PC-3 (cell line): ENCODE measurements at regions of chr15 and their contacts with region 1.

Region 1: DNA sequence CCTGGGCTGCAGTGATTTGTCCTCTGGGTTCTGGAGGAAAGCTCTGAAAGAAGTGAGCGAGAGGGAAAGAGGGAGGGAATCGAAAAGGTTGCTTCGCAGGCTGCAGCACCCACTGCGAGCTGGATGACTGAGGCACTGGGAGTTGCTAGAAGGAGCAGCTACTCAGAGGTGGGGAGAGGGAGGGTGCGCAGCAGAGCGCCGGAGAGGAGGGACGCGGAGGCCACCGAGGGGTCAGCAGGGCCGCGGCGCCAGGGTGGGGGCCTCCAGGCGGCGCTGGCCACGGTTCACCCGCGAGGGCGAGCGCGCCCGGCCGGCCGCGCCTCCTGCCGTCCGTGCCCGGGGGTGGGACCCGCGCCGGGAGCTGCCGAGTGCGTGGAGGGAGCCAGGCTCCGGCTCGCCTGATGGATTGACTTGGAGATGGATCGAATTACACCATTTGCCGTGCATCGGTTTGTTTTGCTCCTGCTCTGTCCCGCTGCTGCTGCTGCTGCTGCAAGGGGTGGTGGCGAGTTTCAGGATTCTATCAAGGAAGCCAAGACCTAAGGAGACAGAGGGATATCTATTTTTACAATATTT is at the start of gene SEMA6D:
- DNase-seq: peak; percentile 73
- ATAC-seq: peak; percentile 81
- H3K4me3 ChIP-seq: peak within 1 kb of the TSS; percentile 82
- H3K27ac ChIP-seq: no peak within 1 kb of the TSS
- H3K4me1 ChIP-seq: peaks cover 9% of the 10 kb centered on the region; the same call in 1 of the 2 replicates
- H3K27me3 ChIP-seq: no peaks in the 10 kb centered on the region
- CTCF ChIP-seq: peak; percentile 45; the same call in 1 of the 2 replicates
- total RNA-seq, gene SEMA6D: 0.52 and 0.91 TPM in 2 replicates

Region 2: DNA sequence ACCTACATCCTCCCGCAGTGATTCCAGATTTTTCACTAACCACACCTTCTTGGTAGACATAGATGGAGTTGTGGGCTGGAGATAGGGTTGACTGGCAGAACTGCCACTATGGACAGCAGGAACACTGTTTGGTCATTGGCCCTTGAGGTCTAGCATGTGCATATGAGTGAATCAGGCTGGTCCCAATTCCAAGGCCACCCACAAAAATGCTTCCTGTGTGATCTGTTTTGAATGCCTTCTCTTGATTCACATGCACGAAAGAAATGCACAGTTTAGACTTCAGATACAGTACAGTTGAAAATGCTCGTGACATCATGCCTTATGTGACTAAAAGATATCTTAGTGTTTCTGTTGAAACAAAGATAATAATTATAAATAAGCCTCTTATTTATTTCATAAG is 285.6 kb before region 1 on chr15:
- CTCF ChIA-PET with region 1: no interaction called
- POLR2A ChIA-PET with region 1: no interaction called
- intact Hi-C with region 1: loop called (anchors 10 kb)
- DNase-seq: peak; percentile 25
- ATAC-seq: no peak
- H3K4me3 ChIP-seq: no peak overlapping the region
- H3K27ac ChIP-seq: no peak overlapping the region
- H3K4me1 ChIP-seq: 0 out of 2 replicates have a peak, but pooled peaks cover 6% of the 10 kb centered on the region
- H3K27me3 ChIP-seq: no peaks in the 10 kb centered on the region
- CTCF ChIP-seq: no peak

Region 3: DNA sequence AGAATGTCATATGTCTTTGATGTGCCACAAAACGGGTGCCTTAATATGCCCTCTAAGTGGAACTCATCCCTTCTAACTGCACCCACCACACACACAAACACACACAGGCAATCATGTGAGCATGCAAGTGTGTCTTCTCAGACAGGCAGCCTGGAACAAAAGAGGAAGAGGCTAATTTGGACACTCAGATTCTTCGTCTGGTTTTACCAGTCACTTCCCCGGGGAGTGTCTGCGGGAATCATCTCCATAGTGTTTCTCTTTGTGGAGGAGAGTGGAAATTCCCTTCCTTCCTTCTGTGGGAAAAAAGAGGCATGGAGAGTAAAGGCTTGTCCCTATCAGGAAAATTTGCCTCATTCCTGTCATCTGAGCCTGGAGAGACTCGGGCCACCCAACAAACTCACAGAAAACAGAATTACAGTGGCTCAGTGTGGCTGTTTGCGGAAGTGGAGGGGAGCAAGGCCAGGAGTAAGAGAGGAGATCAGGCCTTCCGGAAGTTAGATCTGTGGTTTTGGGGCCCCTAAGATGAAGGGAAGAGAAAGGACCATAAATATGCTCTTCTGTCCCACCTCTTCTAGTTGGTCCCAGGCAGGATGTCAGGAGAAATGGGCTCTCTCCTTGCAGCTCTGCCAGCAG is 212.4 kb before region 1 on chr15:
- CTCF ChIA-PET with region 1: no interaction called
- POLR2A ChIA-PET with region 1: no interaction called
- intact Hi-C with region 1: loop called (anchors 5 kb)
- DNase-seq: no peak
- ATAC-seq: no peak
- H3K4me3 ChIP-seq: no peak overlapping the region
- H3K27ac ChIP-seq: no peak overlapping the region
- H3K4me1 ChIP-seq: no peaks in the 10 kb centered on the region
- H3K27me3 ChIP-seq: no peaks in the 10 kb centered on the region
- CTCF ChIP-seq: no peak

Region 4: DNA sequence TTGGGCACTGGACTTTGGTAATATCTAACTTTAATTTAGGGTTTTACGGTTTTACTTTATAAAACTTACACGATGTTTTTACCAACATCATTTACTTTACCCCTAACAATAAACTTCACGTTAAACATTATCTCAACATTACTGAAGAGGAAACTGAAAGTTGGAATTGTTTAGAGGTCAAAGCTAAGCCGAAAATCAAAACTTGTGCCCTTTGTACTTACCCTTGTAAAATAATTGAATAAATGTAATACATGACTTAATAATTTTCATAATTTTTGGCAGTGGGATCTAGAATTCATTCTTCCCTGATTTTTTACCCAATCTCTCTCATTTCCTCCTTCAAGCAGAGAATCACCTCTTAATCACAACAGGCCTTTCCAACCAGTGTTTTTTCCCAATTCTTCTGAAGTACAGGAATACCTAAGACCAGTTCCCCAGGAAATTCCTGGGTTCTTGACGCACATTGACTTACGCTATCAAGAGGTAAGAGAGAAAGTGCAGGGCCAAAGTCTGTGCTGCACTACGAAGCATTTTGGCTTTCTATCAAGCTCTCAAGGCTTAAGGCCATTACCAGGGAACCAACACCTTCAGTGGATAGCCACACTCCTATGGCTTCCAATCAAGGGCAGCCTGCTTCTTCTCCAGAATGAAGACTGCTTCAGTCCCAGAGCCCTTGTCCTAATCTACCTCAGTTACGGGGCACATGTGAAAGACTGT is 11.7 kb before region 1 on chr15:
- CTCF ChIA-PET with region 1: no interaction called
- POLR2A ChIA-PET with region 1: no interaction called
- intact Hi-C with region 1: no loop called
- DNase-seq: no peak
- ATAC-seq: no peak
- H3K4me3 ChIP-seq: no peak overlapping the region
- H3K27ac ChIP-seq: no peak overlapping the region
- H3K4me1 ChIP-seq: no peaks in the 10 kb centered on the region
- H3K27me3 ChIP-seq: no peaks in the 10 kb centered on the region
- CTCF ChIP-seq: no peak

Region 5: DNA sequence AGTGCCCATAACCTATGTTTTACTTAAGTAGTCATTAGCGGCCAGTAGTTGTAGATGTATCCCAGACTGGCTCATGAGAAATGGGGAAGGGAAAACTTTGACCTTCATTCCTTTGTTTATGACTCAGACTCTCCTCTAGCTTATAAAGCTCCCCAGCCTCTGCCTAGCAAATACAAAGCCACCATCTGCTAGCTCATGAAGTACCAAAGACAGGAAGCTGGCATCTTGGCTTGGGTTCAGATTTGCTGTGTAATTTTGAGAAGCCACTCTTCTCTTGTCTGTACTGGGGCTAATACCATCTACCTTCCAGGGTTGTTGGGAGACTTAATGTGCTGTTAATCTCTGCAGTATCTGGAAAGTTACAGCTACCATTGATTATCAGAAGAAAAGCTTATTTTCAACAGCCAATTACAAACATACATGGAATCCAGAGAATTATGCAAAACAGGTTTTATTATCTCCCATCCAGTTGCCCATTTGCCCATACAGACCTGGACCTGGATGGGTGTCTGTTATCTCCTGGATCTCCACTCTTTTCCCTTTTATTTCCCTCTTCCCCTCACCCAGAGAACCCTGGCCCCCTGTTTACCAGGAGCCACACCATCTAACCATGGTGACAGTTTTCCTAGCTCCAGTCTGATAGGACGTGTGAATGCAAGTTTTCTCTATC is 154.0 kb after region 1 on chr15:
- CTCF ChIA-PET with region 1: no interaction called
- POLR2A ChIA-PET with region 1: no interaction called
- intact Hi-C with region 1: loop called (anchors 5 kb)
- DNase-seq: peak; percentile 88
- ATAC-seq: peak; percentile 96
- H3K4me3 ChIP-seq: no peak overlapping the region; the same call in 1 of the 2 replicates
- H3K27ac ChIP-seq: peak overlapping the region; percentile 93
- H3K4me1 ChIP-seq: peaks cover 19% of the 10 kb centered on the region
- H3K27me3 ChIP-seq: no peaks in the 10 kb centered on the region
- CTCF ChIP-seq: no peak

Region 6: GRCh38 chr15:47987908-47988532 is 270.9 kb after region 1 on chr15:
- CTCF ChIA-PET with region 1: interaction called, 4 read pairs
- POLR2A ChIA-PET with region 1: no interaction called
- intact Hi-C with region 1: loop called (anchors 1 kb)
- DNase-seq: peak; percentile 60
- ATAC-seq: peak; percentile 90
- H3K4me3 ChIP-seq: no peak overlapping the region
- H3K27ac ChIP-seq: no peak overlapping the region
- H3K4me1 ChIP-seq: no peaks in the 10 kb centered on the region
- H3K27me3 ChIP-seq: no peaks in the 10 kb centered on the region
- CTCF ChIP-seq: peak; percentile 70